ENCODE measurements at regions of chr4 and their contacts with region 1.

Region 1: DNA sequence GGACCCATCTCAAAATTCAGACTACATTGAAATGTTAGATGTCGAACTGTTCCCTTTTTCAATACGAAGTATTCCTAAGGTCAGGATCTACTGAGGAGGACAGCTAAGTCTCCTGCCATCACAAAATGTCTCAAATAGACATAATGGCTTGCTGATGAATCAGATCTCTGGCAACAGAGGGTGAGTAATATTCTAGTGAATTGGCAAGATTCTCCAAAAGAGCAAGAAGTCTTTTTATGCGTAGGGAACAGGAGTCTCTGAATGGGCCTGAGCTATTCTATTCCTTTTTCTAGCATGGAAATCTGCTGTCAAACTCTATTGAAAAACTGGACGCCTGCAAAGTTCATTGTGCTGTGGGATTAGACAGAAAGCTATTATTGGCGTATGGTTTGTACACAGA is 145.4 kb downstream of the FNIP2 start:
- DNase-seq: peak in 1 of 2 donors; percentile 44
- H3K4me3 ChIP-seq: no peak overlapping the region
- H3K27ac ChIP-seq: peak overlapping the region in 3 of 5 donors; percentile 16 to 50 (median 20)
- H3K4me1 ChIP-seq: peaks cover 0 to 13% (median 5%) of the 10 kb centered on the region in 4 donors
- H3K27me3 ChIP-seq: no peaks in the 10 kb centered on the region
- CTCF ChIP-seq: no peak
- EP300 ChIP-seq: no peak
- POLR2A ChIP-seq: no peak

Region 2: DNA sequence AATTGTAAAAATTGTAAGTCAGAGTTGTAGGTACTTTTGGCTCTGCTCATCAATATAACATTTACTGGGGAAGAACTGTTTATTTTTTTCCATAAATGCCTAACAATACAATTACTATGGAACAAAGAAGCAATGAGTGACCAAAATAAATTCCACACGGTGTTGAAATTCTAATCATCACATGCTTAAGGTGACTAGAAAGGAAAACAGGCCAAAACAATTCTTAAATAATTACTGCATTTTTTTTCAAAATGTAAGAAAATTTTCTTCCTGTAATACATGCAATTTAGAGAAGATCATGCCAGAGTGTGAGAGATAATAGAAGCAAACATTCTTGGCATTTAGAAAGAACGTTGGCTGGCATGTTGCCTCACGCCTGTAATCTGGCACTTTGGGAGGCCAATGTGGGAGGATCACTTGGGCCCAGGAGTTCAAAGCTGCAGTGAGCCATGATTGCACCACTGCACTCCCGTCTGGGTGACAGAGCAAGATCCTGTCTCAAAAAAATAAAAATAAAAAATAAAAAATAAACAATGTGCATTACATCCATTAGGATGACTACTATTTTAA is 265.0 kb before region 1 on chr4:
- intact Hi-C with region 1: no loop called
- DNase-seq: no peak
- H3K4me3 ChIP-seq: no peak overlapping the region
- H3K27ac ChIP-seq: no peak overlapping the region
- H3K4me1 ChIP-seq: peaks cover 0 to 6% (median 0%) of the 10 kb centered on the region in 4 donors
- H3K27me3 ChIP-seq: no peaks in the 10 kb centered on the region
- CTCF ChIP-seq: no peak
- EP300 ChIP-seq: no peak
- POLR2A ChIP-seq: no peak

Region 3: GRCh38 chr4:159035570-159035969 is 121.4 kb after region 1 on chr4:
- intact Hi-C with region 1: loop called (anchors 5 kb)
- DNase-seq: no peak
- H3K4me3 ChIP-seq: no peak overlapping the region
- H3K27ac ChIP-seq: no peak overlapping the region
- H3K4me1 ChIP-seq: no peaks in the 10 kb centered on the region
- H3K27me3 ChIP-seq: no peaks in the 10 kb centered on the region
- CTCF ChIP-seq: no peak
- EP300 ChIP-seq: no peak
- POLR2A ChIP-seq: no peak

Measured in stomach (tissue), 19 donors.